Activated CD8-positive, alpha-beta T cell treated with anti-CD3 and anti-CD28 coated beads for 36 hours (primary cell): ENCODE measurements at regions of chrX and their contacts with region 1.

Region 1: DNA sequence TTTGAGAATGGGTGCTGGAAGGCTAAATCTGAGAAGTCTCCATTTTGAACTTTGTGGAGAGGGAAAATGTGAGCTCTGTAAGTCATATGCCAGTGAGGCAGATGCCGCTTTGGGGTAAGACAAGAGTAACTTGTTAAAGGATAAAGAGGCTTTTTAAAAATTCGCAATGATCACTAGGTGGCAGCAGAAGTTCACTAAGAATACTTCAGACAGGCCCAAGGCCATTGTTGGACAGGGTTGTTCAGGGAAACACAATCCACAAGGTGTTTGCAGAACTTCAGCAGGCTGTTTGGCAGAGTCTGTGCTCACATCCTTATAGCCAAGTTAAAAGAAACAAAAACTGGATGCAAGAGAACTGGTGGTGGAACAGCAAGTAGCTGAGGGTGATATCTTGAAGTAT is 13.7 kb upstream of the PIGA start:
- DNase-seq: peak; percentile 11
- ATAC-seq: peak; percentile 49
- H3K4me3 Mint-ChIP-seq: no peak overlapping the region
- H3K27ac Mint-ChIP-seq: no peak overlapping the region
- H3K4me1 Mint-ChIP-seq: no peaks in the 10 kb centered on the region
- H3K27me3 Mint-ChIP-seq: no peaks in the 10 kb centered on the region
- CTCF ChIP-seq: peak; percentile 49

Region 2: DNA sequence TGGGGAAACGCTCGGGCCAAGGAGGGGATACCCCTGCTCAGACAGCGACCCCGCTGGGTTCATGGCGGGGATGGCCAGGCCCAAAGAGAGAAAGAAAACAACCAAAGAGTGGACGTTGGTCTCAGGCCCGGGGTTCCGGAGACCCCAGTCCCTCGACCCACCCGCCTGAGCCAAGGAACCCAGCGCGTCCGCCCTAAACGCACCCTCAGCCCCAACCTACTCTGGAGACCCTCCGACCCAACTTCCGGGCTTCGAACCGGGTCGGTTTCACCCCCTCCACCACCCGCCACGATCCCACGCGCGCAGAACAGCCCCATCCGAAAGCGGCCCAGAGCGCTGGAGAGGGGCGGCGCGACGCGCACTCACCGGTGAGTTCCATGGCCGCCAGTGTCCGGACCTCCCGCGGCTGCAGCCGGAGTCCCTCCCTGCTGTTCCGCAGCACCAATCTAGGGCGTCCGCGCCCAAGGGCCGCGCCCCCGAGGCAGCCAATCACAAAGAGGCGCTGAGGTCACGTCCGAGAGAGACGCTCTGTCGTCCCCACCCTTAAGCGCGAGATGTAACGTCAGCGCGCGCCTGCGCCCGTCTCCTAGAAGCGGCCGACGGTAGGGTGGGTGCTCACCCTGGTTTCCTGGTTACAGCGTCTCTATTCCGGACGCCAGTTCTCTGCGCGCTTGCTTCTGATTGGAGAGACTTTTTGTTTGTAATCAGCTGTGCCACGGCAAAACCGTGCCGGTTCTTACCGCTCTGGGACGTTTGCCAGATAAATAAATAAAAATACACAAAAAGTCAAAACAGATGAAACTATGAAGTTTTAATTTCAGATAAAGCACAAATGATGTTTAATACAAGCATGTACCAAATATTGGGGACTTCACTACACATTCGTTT is 13.7 kb before region 1 on chrX and contains the start of gene PIGA:
- CTCF ChIA-PET with region 1: interaction called, 12 read pairs
- POLR2A ChIA-PET with region 1: no interaction called
- intact Hi-C with region 1: no loop called
- DNase-seq: peak; percentile 94
- ATAC-seq: peak; percentile 96
- H3K4me3 Mint-ChIP-seq: peak within 1 kb of the TSS; percentile 87
- H3K27ac Mint-ChIP-seq: peak within 1 kb of the TSS; percentile 91
- H3K4me1 Mint-ChIP-seq: peaks cover 11% of the 10 kb centered on the region
- H3K27me3 Mint-ChIP-seq: peaks cover 3% of the 10 kb centered on the region
- CTCF ChIP-seq: no peak
- total RNA-seq, gene PIGA: 40.6 to 41.6 TPM